ENCODE measurements at regions of chr15 and their contacts with region 1.

Region 1: DNA sequence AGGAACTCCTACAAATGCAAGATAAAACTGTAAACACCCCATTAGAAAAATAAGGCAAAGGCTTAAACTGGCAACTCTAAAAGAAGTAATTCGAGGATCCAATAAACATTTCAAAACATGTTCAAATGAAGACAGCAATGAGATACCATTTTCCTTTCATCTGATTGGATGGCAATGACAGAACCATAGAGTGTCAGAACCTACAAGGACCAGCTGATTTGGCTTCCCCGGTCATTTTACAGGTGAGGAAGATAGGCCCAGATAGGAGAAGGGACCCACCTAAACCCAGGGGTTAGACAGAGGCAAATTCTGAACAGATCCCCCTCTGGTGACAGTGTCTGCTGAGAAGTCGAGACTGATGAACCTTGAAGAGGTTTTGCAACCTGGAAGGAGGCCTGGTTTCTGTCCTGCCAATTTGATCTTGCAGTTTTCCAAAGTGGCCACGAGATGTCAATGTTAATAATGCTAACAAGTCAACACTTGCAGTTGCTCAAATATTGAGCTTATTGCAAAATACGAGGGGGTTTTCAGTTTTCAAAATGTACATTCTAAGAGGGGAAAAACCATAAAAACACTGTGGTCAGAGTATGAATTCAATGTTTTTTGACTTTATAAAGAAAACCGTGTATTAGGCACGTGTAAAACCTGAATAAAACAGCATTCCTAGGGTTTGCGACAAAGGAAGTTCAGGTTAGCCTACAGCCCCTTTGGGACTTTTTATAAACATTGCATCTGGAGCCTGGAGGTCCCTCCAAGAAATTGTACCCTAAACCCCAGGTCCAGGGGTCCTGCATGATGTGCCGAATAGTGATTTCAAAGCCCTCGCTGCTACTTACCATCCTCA is 21.5 kb downstream of the CFAP161 start:
- DNase-seq: peak; percentile 41
- H3K4me3 ChIP-seq: no peak overlapping the region
- H3K27ac ChIP-seq: no peak overlapping the region
- H3K4me1 ChIP-seq: no peaks in the 10 kb centered on the region
- H3K27me3 ChIP-seq: no peaks in the 10 kb centered on the region
- CTCF ChIP-seq: peak; percentile 28 to 37
- POLR2A ChIP-seq: no peak

Region 2: GRCh38 chr15:80977627-80978036 is 178.0 kb before region 1 on chr15:
- CTCF ChIA-PET with region 1: interaction called, 18 read pairs
- POLR2A ChIA-PET with region 1: no interaction called
- dilution Hi-C with region 1: no loop called
- intact Hi-C with region 1: loop called (anchors 1 kb)
- DNase-seq: peak; percentile 62
- H3K4me3 ChIP-seq: no peak overlapping the region
- H3K27ac ChIP-seq: no peak overlapping the region
- H3K4me1 ChIP-seq: peaks cover 10% of the 10 kb centered on the region
- H3K27me3 ChIP-seq: no peaks in the 10 kb centered on the region
- CTCF ChIP-seq: peak; percentile 63 to 83
- POLR2A ChIP-seq: no peak

Region 3: DNA sequence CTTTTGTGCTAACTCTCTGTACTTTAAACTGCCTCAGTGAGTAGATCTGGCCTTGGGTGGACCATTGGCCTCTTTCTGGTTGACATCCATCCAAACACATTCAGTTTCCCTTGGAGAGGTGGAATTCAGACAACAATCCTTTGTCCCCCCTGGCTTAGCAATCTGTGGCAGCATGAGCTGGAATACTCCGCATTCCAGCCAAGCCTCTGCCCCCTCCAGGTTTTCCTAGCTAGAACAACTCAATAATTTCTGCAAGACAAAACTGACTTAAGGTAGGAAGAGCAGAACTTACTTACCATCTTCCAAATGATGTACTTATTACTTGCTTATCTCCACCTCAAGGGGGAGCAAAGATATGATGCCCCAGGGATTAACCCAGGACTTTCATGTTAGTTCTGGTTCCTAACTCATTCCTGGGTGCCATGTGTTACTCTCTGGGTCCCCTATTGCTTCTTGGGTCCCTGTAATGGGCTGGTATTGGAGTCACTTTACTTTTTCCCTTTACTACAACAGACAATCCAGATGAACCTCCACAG is 19.3 kb after region 1 on chr15:
- CTCF ChIA-PET with region 1: interaction called, 12 read pairs
- POLR2A ChIA-PET with region 1: no interaction called
- dilution Hi-C with region 1: no loop called
- intact Hi-C with region 1: no loop called
- DNase-seq: no peak
- H3K4me3 ChIP-seq: no peak overlapping the region
- H3K27ac ChIP-seq: no peak overlapping the region
- H3K4me1 ChIP-seq: no peaks in the 10 kb centered on the region
- H3K27me3 ChIP-seq: peaks cover 0 to 5% of the 10 kb centered on the region in 2 experiments
- CTCF ChIP-seq: no peak
- POLR2A ChIP-seq: no peak

Region 4: GRCh38 chr15:81256916-81257315 is 101.3 kb after region 1 on chr15:
- CTCF ChIA-PET with region 1: interaction called, 17 read pairs
- POLR2A ChIA-PET with region 1: no interaction called
- dilution Hi-C with region 1: no loop called
- intact Hi-C with region 1: no loop called
- DNase-seq: peak; percentile 34
- H3K4me3 ChIP-seq: no peak overlapping the region
- H3K27ac ChIP-seq: no peak overlapping the region
- H3K4me1 ChIP-seq: no peaks in the 10 kb centered on the region
- H3K27me3 ChIP-seq: peaks cover 4 to 8% of the 10 kb centered on the region in 2 experiments
- CTCF ChIP-seq: no peak
- POLR2A ChIP-seq: no peak

Measured in endothelial cell of umbilical vein (primary cell).